IMR-90 (cell line): ENCODE measurements at regions of chr3 and their contacts with region 1.

Region 1: DNA sequence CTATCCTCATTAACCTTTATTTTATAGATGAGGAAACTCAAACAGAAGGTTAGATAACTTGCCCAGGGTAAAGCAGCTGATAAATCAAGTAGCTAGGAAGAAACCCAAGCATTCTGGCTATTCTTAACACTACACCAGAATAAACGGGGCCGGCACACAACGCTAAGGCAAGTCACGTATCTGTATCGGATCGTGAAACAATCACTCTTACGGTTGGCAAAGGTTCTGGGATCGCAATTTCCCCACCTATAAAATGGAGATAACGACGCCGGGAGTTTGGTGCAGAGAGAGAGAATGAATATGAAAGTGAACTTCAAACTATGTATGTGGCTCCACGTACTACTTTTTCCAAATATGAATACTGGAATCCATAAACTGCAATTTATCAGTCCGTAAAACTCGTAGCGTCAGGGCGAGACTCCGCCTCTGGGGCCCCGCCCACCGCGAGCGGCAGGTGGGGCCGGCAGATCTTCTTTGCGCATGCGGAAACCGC is 252 bp upstream of the ARMC8 start:
- DNase-seq: peak; percentile 83
- ATAC-seq: peak; percentile 95
- H3K4me3 ChIP-seq: peak overlapping the region; percentile 57
- H3K27ac ChIP-seq: peak overlapping the region; percentile 89
- H3K4me1 ChIP-seq: peaks cover 2% of the 10 kb centered on the region; the same call in 1 of the 2 replicates
- H3K27me3 ChIP-seq: peaks cover 1% of the 10 kb centered on the region; the same call in 1 of the 2 replicates
- CTCF ChIP-seq: no peak
- POLR2A ChIP-seq: no peak
- RAD21 ChIP-seq: no peak

Region 2: DNA sequence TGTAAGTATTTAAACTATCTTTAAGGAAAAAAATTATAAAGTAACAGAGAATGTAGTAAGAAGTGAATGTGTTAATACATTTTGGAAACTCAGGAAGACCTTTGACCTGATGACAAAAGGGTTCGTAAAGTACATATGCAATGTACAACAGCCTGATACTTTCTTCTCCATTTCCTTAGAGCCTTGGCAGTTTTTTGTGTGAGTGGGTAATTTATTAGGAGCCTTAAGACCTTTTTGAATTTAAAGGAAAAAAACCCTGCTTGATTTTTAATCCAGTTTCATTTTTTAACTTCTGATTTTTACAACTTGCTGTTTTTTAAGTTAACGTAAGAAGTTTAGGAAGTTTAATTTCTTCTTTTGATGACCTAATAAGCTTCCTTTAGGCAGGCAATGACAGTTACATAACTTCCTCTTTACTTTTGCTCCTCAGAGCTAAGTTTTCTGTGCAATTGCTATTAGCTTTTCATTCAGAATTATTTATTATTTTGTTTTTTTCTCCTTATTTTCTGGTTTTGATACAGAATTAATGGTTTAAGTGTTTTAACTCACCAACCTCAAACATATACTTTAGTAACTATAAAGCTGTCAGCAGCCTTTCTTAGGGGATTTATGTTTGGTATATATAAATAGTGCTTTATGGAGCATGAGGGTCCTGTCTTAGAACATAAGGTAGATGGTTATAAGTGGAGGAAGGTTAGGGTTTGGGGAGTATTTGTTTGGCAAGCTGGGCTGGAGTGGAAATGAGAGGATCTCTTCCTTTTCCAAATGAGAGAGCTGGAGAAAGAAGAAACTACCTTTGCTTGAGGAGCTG is 35.5 kb after region 1 on chr3:
- CTCF ChIA-PET with region 1: no interaction called
- POLR2A ChIA-PET with region 1: no interaction called
- dilution Hi-C with region 1: no loop called
- in situ Hi-C with region 1: no loop called
- intact Hi-C with region 1: loop called (anchors 5 kb)
- DNase-seq: no peak
- ATAC-seq: no peak
- H3K4me3 ChIP-seq: no peak overlapping the region
- H3K27ac ChIP-seq: no peak overlapping the region
- H3K4me1 ChIP-seq: 0 out of 2 replicates have a peak, but pooled peaks cover 2% of the 10 kb centered on the region
- H3K27me3 ChIP-seq: no peaks in the 10 kb centered on the region
- CTCF ChIP-seq: no peak
- POLR2A ChIP-seq: no peak
- RAD21 ChIP-seq: no peak

Region 3: DNA sequence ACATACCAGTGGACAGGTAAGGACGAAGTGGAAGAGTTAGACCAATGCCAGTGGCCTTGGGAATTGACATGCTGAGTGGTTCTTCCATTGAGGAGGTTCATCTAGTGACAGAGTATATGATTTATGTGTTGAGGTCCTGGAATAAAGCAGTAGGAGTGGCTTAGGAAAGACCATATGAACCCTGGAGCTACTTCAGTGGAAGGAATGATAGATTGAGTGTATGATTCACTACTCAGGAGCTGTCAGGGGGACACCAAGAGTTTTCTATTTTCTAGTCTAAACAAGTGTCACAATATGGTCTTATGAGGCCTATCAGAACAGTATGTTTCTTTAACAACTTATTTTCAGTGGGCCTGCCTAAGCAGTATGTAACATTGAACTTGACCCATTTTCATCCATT is 78.9 kb after region 1 on chr3:
- CTCF ChIA-PET with region 1: no interaction called
- POLR2A ChIA-PET with region 1: no interaction called
- dilution Hi-C with region 1: no loop called
- in situ Hi-C with region 1: no loop called
- intact Hi-C with region 1: loop called (anchors 5 kb)
- DNase-seq: no peak
- ATAC-seq: no peak
- H3K4me3 ChIP-seq: no peak overlapping the region
- H3K27ac ChIP-seq: no peak overlapping the region
- H3K4me1 ChIP-seq: no peaks in the 10 kb centered on the region
- H3K27me3 ChIP-seq: no peaks in the 10 kb centered on the region
- CTCF ChIP-seq: no peak
- POLR2A ChIP-seq: no peak
- RAD21 ChIP-seq: no peak

Region 4: GRCh38 chr3:138329127-138329983 is 142.5 kb after region 1 on chr3 and contains the start of gene NME9:
- CTCF ChIA-PET with region 1: no interaction called
- POLR2A ChIA-PET with region 1: no interaction called
- dilution Hi-C with region 1: no loop called
- in situ Hi-C with region 1: no loop called
- intact Hi-C with region 1: loop called (anchors 5 kb)
- DNase-seq: peak; percentile 73
- ATAC-seq: peak; percentile 97
- H3K4me3 ChIP-seq: peak within 1 kb of the TSS; percentile 62
- H3K27ac ChIP-seq: no peak within 1 kb of the TSS
- H3K4me1 ChIP-seq: no peaks in the 10 kb centered on the region
- H3K27me3 ChIP-seq: peaks cover under 1% of the 10 kb centered on the region
- CTCF ChIP-seq: peak; percentile 50
- POLR2A ChIP-seq: no peak
- RAD21 ChIP-seq: peak; percentile 36
- total RNA-seq, gene NME9: not detected in 2 replicates